CD4-positive, alpha-beta T cell (primary cell): ENCODE measurements at regions of chr21 and their contacts with region 1.

Region 1: GRCh38 chr21:43938751-43939442 is 73.2 kb upstream of the TRAPPC10 start:
- DNase-seq: peak; percentile 86 to 94 (median 90)
- ATAC-seq: peak; percentile 100
- H3K4me3 ChIP-seq: peak overlapping the region; percentile 62
- H3K4me3 Mint-ChIP-seq: peak overlapping the region; percentile 88
- H3K27ac ChIP-seq: peak overlapping the region in 1 of 2 donors; percentile 12
- H3K27ac Mint-ChIP-seq: peak overlapping the region; percentile 82
- H3K4me1 ChIP-seq: peaks cover 20% of the 10 kb centered on the region
- H3K4me1 Mint-ChIP-seq: peaks cover 19% of the 10 kb centered on the region
- H3K27me3 ChIP-seq: no peaks in the 10 kb centered on the region
- H3K27me3 Mint-ChIP-seq: no peaks in the 10 kb centered on the region
- CTCF ChIP-seq: peak; percentile 99

Region 2: GRCh38 chr21:43975495-43975993 is 36.6 kb after region 1 on chr21:
- CTCF ChIA-PET with region 1: interaction called, 6 read pairs
- POLR2A ChIA-PET with region 1: no interaction called
- intact Hi-C with region 1: loop called (anchors 1 kb)
- DNase-seq: peak; percentile 74 to 88 (median 80)
- ATAC-seq: peak; percentile 97
- H3K4me3 ChIP-seq: no peak overlapping the region
- H3K4me3 Mint-ChIP-seq: no peak overlapping the region
- H3K27ac ChIP-seq: no peak overlapping the region
- H3K27ac Mint-ChIP-seq: peak overlapping the region; percentile 80
- H3K4me1 ChIP-seq: peaks cover 5% of the 10 kb centered on the region
- H3K4me1 Mint-ChIP-seq: peaks cover 10% of the 10 kb centered on the region
- H3K27me3 ChIP-seq: no peaks in the 10 kb centered on the region
- H3K27me3 Mint-ChIP-seq: no peaks in the 10 kb centered on the region
- CTCF ChIP-seq: peak; percentile 90